ENCODE measurements at regions of chr10 and their contacts with region 1.

Region 1: GRCh38 chr10:77649333-77650331 is 12.0 kb upstream of the KCNMA1 start:
- DNase-seq: no peak
- H3K4me3 ChIP-seq: no peak overlapping the region
- H3K27ac ChIP-seq: no peak overlapping the region
- H3K4me1 ChIP-seq: no peaks in the 10 kb centered on the region
- H3K27me3 ChIP-seq: peaks cover 0 to 34% (median 0%) of the 10 kb centered on the region in 4 donors
- CTCF ChIP-seq: no peak
- POLR2A ChIP-seq: no peak

Region 2: GRCh38 chr10:77173615-77174461 is 475.8 kb before region 1 on chr10:
- intact Hi-C with region 1: loop called (anchors 5 kb)
- DNase-seq: no peak
- H3K4me3 ChIP-seq: no peak overlapping the region
- H3K27ac ChIP-seq: no peak overlapping the region
- H3K4me1 ChIP-seq: peaks cover 0 to 14% (median 0%) of the 10 kb centered on the region in 3 donors
- H3K27me3 ChIP-seq: peaks cover 0 to 4% (median 0%) of the 10 kb centered on the region in 4 donors
- CTCF ChIP-seq: peak; percentile 55 to 91 (median 88)
- POLR2A ChIP-seq: no peak